ENCODE measurements at regions of chrX and their contacts with region 1.

Region 1: GRCh38 chrX:131728295-131729145 is 184.6 kb downstream of the OR13H1 start:
- DNase-seq: peak; percentile 78
- H3K4me3 ChIP-seq: peak overlapping the region; percentile 33 to 49 (median 40)
- H3K27ac ChIP-seq: peak overlapping the region; percentile 36
- H3K4me1 ChIP-seq: no peaks in the 10 kb centered on the region
- H3K27me3 ChIP-seq: no peaks in the 10 kb centered on the region
- CTCF ChIP-seq: peak; percentile 33 to 60

Region 2: DNA sequence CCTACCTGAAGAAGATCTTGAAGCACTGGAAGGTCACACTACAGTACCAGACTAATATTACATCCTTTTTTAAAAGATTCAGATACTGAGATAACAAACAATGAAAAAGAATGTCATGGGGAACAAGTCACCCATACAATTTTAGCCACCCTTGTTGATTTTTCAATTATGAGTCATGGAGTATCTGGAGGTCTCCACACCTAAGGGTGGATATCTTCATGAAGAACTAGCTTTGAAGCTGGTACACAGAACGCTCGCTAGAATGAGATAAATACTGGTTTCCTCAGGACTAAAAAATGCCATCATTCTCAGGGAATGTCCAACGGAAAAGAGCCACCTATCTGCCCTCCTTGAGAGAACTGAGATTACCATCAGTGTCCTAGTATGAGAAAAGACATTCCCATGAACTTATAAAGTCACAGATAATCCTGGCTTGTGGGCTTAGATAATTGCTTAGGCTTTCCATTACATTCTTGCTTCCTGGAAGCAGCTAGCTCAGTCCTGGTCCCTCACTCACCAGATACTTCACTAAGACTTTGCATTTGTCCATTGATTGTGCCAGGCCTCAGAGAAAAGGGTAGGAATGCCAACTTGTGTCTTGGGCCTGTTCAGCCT is 18.0 kb before region 1 on chrX:
- CTCF ChIA-PET with region 1: no interaction called
- dilution Hi-C with region 1: no loop called
- in situ Hi-C with region 1: no loop called
- intact Hi-C with region 1: loop called (anchors 1 kb)
- DNase-seq: no peak
- H3K4me3 ChIP-seq: no peak overlapping the region
- H3K27ac ChIP-seq: no peak overlapping the region
- H3K4me1 ChIP-seq: no peaks in the 10 kb centered on the region
- H3K27me3 ChIP-seq: no peaks in the 10 kb centered on the region
- CTCF ChIP-seq: no peak

Region 3: DNA sequence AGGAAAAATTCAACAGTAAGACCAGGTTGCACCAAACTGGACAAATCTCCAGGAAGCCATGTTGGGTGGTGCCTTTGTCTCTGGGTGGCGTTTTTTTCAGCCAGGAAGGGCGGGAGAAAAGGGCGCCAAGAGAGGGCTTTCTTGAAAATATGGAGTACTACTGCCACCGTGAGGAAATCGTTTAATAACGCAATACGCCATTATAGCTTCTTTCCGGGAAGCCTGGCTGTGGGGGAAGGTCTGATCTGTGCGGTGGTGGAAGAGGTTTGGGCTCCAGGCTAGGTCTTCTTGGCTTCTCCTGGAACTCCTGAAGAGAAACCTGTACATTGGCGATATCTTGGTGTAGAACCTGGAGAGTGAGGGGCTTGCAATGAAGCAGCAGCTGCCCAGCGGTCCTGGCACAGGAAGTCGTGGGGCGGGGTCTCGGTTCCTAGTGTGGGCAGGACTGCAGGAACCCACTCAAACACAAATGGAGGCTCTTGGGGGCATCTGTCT is 18.0 kb after region 1 on chrX:
- CTCF ChIA-PET with region 1: no interaction called
- dilution Hi-C with region 1: no loop called
- in situ Hi-C with region 1: no loop called
- intact Hi-C with region 1: loop called (anchors 1 kb)
- DNase-seq: peak; percentile 79
- H3K4me3 ChIP-seq: peak overlapping the region; percentile 54 to 66 (median 57)
- H3K27ac ChIP-seq: peak overlapping the region; percentile 57
- H3K4me1 ChIP-seq: no peaks in the 10 kb centered on the region
- H3K27me3 ChIP-seq: no peaks in the 10 kb centered on the region
- CTCF ChIP-seq: peak; percentile 22 to 45

Region 4: GRCh38 chrX:131778269-131779218 is 50.0 kb after region 1 on chrX:
- CTCF ChIA-PET with region 1: no interaction called
- dilution Hi-C with region 1: no loop called
- in situ Hi-C with region 1: no loop called
- intact Hi-C with region 1: loop called (anchors 1 kb)
- DNase-seq: peak; percentile 70
- H3K4me3 ChIP-seq: peak overlapping the region; percentile 36 to 50 (median 49)
- H3K27ac ChIP-seq: peak overlapping the region; percentile 70
- H3K4me1 ChIP-seq: peaks cover 4% of the 10 kb centered on the region
- H3K27me3 ChIP-seq: no peaks in the 10 kb centered on the region
- CTCF ChIP-seq: peak; percentile 21 to 45

Region 5: GRCh38 chrX:131821945-131822622 is 93.6 kb after region 1 on chrX:
- CTCF ChIA-PET with region 1: no interaction called
- dilution Hi-C with region 1: no loop called
- in situ Hi-C with region 1: no loop called
- intact Hi-C with region 1: loop called (anchors 1 kb)
- DNase-seq: peak; percentile 69
- H3K4me3 ChIP-seq: peak overlapping the region; percentile 36 to 48 (median 45)
- H3K27ac ChIP-seq: peak overlapping the region; percentile 55
- H3K4me1 ChIP-seq: no peaks in the 10 kb centered on the region
- H3K27me3 ChIP-seq: no peaks in the 10 kb centered on the region
- CTCF ChIP-seq: peak; percentile 31 to 43

Region 6: DNA sequence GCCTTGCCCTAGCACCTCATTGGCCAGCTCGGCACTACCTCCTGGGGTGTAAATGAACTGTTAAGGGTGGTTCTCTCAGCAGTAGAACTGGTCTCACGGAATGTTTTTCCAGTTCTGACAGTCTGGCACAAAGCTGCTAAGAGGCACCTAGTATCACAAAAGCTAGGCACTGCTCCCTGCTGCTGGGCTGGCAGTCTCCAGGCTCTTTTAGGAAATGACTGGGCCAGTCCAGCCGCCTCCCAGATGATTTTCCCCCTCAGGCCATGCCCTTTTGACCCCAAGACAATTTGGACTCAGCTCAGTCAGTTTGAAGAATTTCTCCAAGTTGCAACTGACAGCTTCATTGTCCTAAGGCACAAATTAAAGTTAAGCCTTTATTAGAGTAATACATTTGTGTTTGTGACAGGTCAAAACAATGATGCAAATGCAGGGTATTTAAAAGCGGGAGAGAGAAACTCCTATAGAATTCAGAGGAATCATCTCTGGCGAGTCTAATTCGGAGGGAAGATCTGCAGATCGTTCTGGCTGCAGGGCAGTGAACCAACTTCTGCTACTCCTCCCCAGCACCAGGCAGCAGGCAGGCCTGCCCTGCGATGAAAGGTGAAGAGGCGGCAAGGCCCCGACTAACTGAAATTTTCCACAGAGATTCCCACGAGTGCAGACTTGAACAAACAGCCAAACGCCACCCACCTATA is 391.4 kb after region 1 on chrX:
- CTCF ChIA-PET with region 1: no interaction called
- dilution Hi-C with region 1: no loop called
- in situ Hi-C with region 1: no loop called
- intact Hi-C with region 1: no loop called
- DNase-seq: peak; percentile 19
- H3K4me3 ChIP-seq: no peak overlapping the region
- H3K27ac ChIP-seq: no peak overlapping the region
- H3K4me1 ChIP-seq: peaks cover 10% of the 10 kb centered on the region
- H3K27me3 ChIP-seq: no peaks in the 10 kb centered on the region
- CTCF ChIP-seq: no peak

Measured in mammary epithelial cell (primary cell).